Endothelial cell of umbilical vein (primary cell): ENCODE measurements at regions of chr7 and their contacts with region 1.

Region 1: GRCh38 chr7:27095897-27096767 is at the start of gene HOXA1:
- DNase-seq: peak; percentile 95
- H3K4me3 ChIP-seq: peak within 1 kb of the TSS; percentile 80 to 92 (median 86)
- H3K27ac ChIP-seq: peak within 1 kb of the TSS; percentile 93
- H3K4me1 ChIP-seq: peaks cover 48% of the 10 kb centered on the region
- H3K27me3 ChIP-seq: no peaks in the 10 kb centered on the region
- CTCF ChIP-seq: peak in 1 of 2 donors; percentile 10
- POLR2A ChIP-seq: peak; percentile 92
- total RNA-seq, gene HOXA1: 1.5 and 2.4 TPM in 2 replicates

Region 2: GRCh38 chr7:25857376-25857921 is 1238.7 kb before region 1 on chr7:
- CTCF ChIA-PET with region 1: no interaction called
- POLR2A ChIA-PET with region 1: no interaction called
- dilution Hi-C with region 1: no loop called
- intact Hi-C with region 1: loop called (anchors 1 kb)
- DNase-seq: no peak
- H3K4me3 ChIP-seq: peak overlapping the region in 2 of 3 experiments; percentile 28
- H3K27ac ChIP-seq: peak overlapping the region; percentile 31
- H3K4me1 ChIP-seq: peaks cover 18% of the 10 kb centered on the region
- H3K27me3 ChIP-seq: peaks cover 46 to 47% of the 10 kb centered on the region in 2 experiments
- CTCF ChIP-seq: no peak
- POLR2A ChIP-seq: no peak

Region 3: DNA sequence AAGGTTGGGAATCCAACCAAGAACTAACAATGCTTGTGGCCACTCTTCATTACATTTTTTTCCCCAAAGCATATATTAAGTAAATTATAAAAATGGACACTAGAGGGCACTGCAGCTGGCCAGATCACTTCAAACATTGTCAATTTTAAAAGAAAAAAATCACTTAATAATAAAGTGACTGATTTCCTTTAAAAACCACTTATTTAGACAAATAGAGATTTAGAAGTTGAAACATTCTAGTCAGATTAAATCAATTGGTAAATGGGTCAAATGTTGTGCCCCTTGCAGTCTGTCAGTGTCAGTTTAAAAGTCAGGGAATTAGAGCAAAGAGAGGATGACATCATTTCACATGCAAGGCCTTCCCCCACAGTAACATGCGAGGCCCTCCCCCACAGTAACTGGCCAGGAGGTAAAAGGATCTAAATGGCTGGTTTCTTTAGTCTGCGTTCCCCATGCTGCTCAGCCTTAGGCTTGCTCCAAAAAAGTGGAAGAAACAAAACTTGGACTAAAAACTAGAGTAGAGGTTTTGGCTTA is 409.6 kb before region 1 on chr7:
- CTCF ChIA-PET with region 1: interaction called, 6 read pairs
- POLR2A ChIA-PET with region 1: no interaction called
- dilution Hi-C with region 1: no loop called
- intact Hi-C with region 1: loop called (anchors 1 kb)
- DNase-seq: peak; percentile 90
- H3K4me3 ChIP-seq: no peak overlapping the region
- H3K27ac ChIP-seq: peak overlapping the region; percentile 78
- H3K4me1 ChIP-seq: peaks cover 91% of the 10 kb centered on the region
- H3K27me3 ChIP-seq: no peaks in the 10 kb centered on the region
- CTCF ChIP-seq: peak; percentile 23 to 35
- POLR2A ChIP-seq: no peak

Region 4: GRCh38 chr7:26853788-26854393 is 242.2 kb before region 1 on chr7:
- CTCF ChIA-PET with region 1: interaction called, 124 read pairs
- POLR2A ChIA-PET with region 1: interaction called, 3 read pairs
- dilution Hi-C with region 1: no loop called
- intact Hi-C with region 1: loop called (anchors 1 kb)
- DNase-seq: peak; percentile 69
- H3K4me3 ChIP-seq: no peak overlapping the region
- H3K27ac ChIP-seq: no peak overlapping the region
- H3K4me1 ChIP-seq: peaks cover 34% of the 10 kb centered on the region
- H3K27me3 ChIP-seq: no peaks in the 10 kb centered on the region
- CTCF ChIP-seq: peak; percentile 24 to 26
- POLR2A ChIP-seq: no peak

Region 5: GRCh38 chr7:27046854-27047549 is 49.1 kb before region 1 on chr7:
- CTCF ChIA-PET with region 1: interaction called, 3 read pairs
- POLR2A ChIA-PET with region 1: no interaction called
- dilution Hi-C with region 1: no loop called
- intact Hi-C with region 1: loop called (anchors 2 kb)
- DNase-seq: peak; percentile 76
- H3K4me3 ChIP-seq: peak overlapping the region in 1 of 3 experiments; percentile 46
- H3K27ac ChIP-seq: peak overlapping the region; percentile 58
- H3K4me1 ChIP-seq: peaks cover 9% of the 10 kb centered on the region
- H3K27me3 ChIP-seq: no peaks in the 10 kb centered on the region
- CTCF ChIP-seq: no peak
- POLR2A ChIP-seq: no peak

Region 6: DNA sequence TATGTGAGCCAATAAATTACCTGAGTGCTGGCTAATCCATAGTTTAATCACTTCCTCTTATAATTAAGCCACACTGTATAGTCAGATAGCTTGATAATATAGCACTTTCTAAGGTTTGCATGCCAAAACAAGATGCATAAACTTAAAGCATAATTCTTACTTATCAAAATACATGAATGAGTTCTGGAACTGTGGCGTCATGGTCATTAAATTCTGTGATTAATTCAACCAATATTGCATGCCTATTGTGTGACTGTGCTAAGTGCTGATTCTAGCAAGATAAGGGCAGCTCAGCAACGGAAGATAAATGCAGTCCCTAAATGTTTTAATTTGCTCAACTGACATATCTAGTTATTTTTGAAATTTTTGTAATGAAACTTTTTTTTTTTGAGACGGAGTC is 30.0 kb before region 1 on chr7:
- CTCF ChIA-PET with region 1: no interaction called
- POLR2A ChIA-PET with region 1: interaction called, 3 read pairs
- dilution Hi-C with region 1: no loop called
- intact Hi-C with region 1: loop called (anchors 2 kb)
- DNase-seq: peak; percentile 69
- H3K4me3 ChIP-seq: no peak overlapping the region
- H3K27ac ChIP-seq: no peak overlapping the region
- H3K4me1 ChIP-seq: peaks cover 5% of the 10 kb centered on the region
- H3K27me3 ChIP-seq: no peaks in the 10 kb centered on the region
- CTCF ChIP-seq: no peak
- POLR2A ChIP-seq: no peak

Region 7: DNA sequence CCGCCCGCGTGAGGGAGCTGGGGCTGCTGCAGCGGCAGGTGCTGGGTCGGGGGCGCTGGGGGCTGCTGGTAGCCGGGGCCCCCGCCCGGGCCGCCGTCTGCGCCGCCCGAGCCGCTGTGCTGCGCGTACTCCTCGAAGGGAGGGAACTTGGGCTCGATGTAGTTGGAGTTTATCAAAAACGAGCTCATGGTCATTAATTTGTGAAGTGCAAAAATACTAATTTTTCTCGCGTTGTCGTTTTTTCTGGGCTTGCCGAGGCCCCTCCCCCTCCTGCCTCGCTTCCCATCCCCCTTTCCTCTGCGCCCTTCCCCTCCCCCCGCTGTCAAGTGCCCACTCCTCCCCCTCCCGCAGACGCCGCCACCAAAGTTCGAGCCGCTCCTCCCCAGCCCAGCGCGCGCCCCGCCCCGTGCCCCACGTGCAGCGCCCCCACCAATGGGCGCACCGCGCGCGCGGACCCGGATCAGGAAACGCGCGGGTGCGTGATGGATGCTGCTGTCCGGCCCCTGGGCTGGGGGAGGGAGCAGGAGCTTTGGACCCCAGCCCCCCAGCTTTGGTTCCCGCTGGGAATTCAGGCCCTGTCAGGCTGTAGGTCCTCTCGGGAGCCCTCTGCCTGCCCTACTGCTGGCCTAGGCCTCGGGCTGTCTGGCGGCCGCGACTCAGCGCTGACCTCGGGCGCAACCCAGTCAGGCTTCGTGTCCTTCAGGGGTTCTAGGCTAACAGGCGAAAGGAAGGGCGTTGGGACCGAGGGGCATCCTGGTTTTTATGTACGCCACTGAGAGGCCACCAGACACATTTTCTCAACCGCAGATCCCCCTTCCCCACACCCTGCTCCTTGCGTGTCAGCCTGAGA is 34.6 kb after region 1 on chr7 and contains the start of gene HOXA4:
- CTCF ChIA-PET with region 1: interaction called, 3 read pairs
- POLR2A ChIA-PET with region 1: interaction called, 4 read pairs
- dilution Hi-C with region 1: no loop called
- intact Hi-C with region 1: loop called (anchors 1 kb)
- DNase-seq: peak; percentile 89
- H3K4me3 ChIP-seq: peak within 1 kb of the TSS; percentile 36 to 60 (median 58)
- H3K27ac ChIP-seq: peak within 1 kb of the TSS; percentile 67
- H3K4me1 ChIP-seq: peaks cover 66% of the 10 kb centered on the region
- H3K27me3 ChIP-seq: no peaks in the 10 kb centered on the region
- CTCF ChIP-seq: no peak
- POLR2A ChIP-seq: peak; percentile 57
- total RNA-seq, gene HOXA4: 7.5 and 8.1 TPM in 2 replicates